ENCODE measurements at regions of chr3 and their contacts with region 1.

Region 1: DNA sequence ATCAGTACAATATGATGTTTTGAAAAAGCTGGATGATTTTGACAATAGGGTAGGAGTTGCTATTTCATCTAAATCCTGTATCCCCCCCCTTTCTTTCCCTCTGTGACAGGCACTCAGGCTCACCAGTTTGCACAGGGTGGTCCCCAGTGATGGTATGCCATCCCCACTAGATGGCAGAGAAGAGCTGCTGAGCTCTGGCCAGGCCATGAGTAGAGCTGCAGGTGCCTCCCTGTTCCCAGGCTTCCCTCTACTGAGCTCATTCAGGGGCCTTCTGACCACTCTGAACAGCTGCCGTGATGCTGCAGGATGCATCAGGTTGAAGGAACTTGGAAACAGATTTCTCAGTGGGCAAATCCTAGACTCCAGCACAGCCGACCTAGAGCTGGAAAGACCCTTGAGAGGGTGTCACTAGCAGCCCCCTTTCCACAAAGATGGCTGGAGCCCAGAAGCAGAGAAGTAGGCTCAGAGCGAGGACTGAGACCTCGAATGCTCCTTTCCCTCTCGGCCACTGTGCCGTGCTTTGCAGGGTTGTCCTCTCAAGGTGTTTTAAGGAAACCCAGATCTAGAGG is 45.1 kb downstream of the EFCAB12 start:
- DNase-seq: peak; percentile 71 to 76
- ATAC-seq: peak; percentile 95 to 98
- H3K4me3 ChIP-seq: no peak overlapping the region
- H3K27ac ChIP-seq: peak overlapping the region; percentile 48 to 81; a peak in 5 of 6 replicates
- H3K4me1 ChIP-seq: peaks cover 38% of the 10 kb centered on the region
- CTCF ChIP-seq: peak; percentile 72
- EP300 ChIP-seq: no peak
- POLR2A ChIP-seq: no peak
- RAD21 ChIP-seq: peak; percentile 87 to 90

Region 2: GRCh38 chr3:129371041-129371826 is 12.1 kb before region 1 on chr3:
- CTCF ChIA-PET with region 1: interaction called, 24 read pairs
- POLR2A ChIA-PET with region 1: no interaction called
- DNase-seq: no peak
- ATAC-seq: peak; percentile 30 to 52; a peak in 3 of 6 replicates
- H3K4me3 ChIP-seq: no peak overlapping the region
- H3K27ac ChIP-seq: no peak overlapping the region
- H3K4me1 ChIP-seq: no peaks in the 10 kb centered on the region
- CTCF ChIP-seq: no peak
- EP300 ChIP-seq: no peak
- POLR2A ChIP-seq: no peak
- RAD21 ChIP-seq: no peak

Region 3: GRCh38 chr3:129413687-129414506 is 30.5 kb after region 1 on chr3:
- CTCF ChIA-PET with region 1: interaction called, 13 read pairs
- POLR2A ChIA-PET with region 1: no interaction called
- DNase-seq: peak; percentile 67 to 87
- ATAC-seq: peak; percentile 93 to 94
- H3K4me3 ChIP-seq: no peak overlapping the region
- H3K27ac ChIP-seq: peak overlapping the region; percentile 93 to 94
- H3K4me1 ChIP-seq: peaks cover 52% of the 10 kb centered on the region
- CTCF ChIP-seq: no peak
- EP300 ChIP-seq: no peak
- POLR2A ChIP-seq: no peak
- RAD21 ChIP-seq: no peak

Region 4: DNA sequence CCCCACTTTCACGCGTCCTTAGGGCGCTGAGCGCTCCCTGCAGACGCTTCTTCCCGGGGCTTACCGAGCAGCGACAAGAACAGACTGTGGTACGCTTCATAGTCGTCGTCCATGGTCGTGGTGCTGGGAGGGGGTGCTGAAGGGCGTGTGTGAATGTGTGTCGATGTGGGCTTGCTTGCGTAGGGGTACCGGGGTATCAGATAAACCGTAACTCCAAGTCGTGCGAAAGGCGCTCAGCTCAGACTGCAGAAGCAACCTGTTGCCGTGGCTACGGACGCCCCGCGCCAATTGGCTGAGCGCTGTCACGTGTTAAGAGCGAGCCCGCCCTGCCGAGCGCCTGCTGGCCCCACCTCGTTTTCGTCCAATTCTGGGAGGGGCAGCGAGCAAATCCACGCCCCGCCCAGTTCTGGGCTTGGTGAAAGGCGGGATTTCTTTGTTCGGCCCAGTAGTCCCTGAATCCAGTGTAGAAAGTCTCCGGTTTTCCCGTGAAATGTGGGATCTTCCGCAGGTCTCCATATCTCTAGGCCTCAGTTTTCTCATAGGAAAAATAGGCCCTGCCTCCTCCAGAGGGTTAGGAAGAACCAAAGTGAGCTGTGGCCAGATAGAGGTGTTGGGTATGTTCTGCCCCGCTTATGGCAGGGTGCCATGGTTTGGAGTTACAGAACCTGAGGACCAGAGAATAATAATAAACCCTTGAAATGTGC is 45.2 kb after region 1 on chr3 and contains the start of gene EFCAB12:
- CTCF ChIA-PET with region 1: interaction called, 16 read pairs
- POLR2A ChIA-PET with region 1: no interaction called
- DNase-seq: peak; percentile 80 to 91
- ATAC-seq: peak; percentile 98
- H3K4me3 ChIP-seq: peak within 1 kb of the TSS; percentile 44
- H3K27ac ChIP-seq: peak within 1 kb of the TSS; percentile 62 to 73
- H3K4me1 ChIP-seq: peaks cover 26% of the 10 kb centered on the region
- CTCF ChIP-seq: no peak
- EP300 ChIP-seq: no peak
- POLR2A ChIP-seq: no peak
- RAD21 ChIP-seq: no peak
- polyA plus RNA-seq, gene EFCAB12: 0.62 and 0.82 TPM in 2 replicates

Region 5: GRCh38 chr3:129474984-129475804 is 91.8 kb after region 1 on chr3:
- CTCF ChIA-PET with region 1: interaction called, 12 read pairs
- POLR2A ChIA-PET with region 1: no interaction called
- DNase-seq: no peak
- ATAC-seq: no peak
- H3K4me3 ChIP-seq: no peak overlapping the region
- H3K27ac ChIP-seq: no peak overlapping the region
- H3K4me1 ChIP-seq: no peaks in the 10 kb centered on the region
- CTCF ChIP-seq: no peak
- EP300 ChIP-seq: no peak
- POLR2A ChIP-seq: no peak
- RAD21 ChIP-seq: no peak